ENCODE measurements at regions of chr3 and their contacts with region 1.

Region 1: DNA sequence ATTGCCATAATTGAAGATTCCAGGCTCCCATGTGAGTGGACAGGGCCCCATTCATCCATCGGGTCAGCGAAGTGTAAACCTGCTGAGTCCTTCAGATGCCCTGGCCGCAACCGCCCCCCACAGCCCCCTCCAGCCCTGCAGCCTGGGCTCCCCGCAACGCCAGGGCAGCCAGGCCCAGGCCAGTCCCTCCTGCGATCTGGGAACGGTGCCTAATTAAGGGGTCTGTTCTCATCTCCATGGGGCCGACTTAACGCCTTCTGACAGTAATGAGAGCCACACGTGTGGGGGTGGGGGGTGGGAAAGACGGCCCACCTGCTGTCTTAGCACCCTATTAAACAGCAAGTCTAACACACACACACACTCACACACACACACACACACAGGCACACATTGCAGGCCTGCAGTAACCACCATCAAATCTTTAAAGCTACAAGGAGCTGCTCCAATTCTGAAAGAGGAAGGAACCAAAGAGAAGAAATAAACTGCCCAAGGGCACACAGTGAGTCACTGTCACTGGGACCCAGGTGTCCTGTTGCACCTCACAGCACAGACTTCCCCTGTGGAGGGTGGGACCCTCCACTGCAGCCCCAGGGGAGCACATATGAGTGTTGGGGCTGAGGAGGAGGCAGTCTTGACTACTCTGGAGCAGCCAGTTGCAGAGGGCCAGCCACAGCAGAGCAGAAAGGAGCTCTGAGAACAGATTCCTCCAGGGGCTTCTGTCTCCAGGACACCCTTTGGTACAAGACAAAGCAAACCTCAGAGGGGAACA is 31.8 kb upstream of the HES1 start:
- DNase-seq: no peak
- ATAC-seq: peak; percentile 4; the same call in 2 of the 3 replicates
- H3K4me3 ChIP-seq: no peak overlapping the region
- H3K27ac ChIP-seq: no peak overlapping the region
- H3K4me1 ChIP-seq: peaks cover 43% of the 10 kb centered on the region
- H3K27me3 ChIP-seq: peaks cover 2 to 12% of the 10 kb centered on the region in 2 experiments
- CTCF ChIP-seq: no peak
- EP300 ChIP-seq: no peak
- POLR2A ChIP-seq: no peak
- RAD21 ChIP-seq: 0 out of 2 replicates have a peak, but pooled peaks have one; percentile 0

Region 2: DNA sequence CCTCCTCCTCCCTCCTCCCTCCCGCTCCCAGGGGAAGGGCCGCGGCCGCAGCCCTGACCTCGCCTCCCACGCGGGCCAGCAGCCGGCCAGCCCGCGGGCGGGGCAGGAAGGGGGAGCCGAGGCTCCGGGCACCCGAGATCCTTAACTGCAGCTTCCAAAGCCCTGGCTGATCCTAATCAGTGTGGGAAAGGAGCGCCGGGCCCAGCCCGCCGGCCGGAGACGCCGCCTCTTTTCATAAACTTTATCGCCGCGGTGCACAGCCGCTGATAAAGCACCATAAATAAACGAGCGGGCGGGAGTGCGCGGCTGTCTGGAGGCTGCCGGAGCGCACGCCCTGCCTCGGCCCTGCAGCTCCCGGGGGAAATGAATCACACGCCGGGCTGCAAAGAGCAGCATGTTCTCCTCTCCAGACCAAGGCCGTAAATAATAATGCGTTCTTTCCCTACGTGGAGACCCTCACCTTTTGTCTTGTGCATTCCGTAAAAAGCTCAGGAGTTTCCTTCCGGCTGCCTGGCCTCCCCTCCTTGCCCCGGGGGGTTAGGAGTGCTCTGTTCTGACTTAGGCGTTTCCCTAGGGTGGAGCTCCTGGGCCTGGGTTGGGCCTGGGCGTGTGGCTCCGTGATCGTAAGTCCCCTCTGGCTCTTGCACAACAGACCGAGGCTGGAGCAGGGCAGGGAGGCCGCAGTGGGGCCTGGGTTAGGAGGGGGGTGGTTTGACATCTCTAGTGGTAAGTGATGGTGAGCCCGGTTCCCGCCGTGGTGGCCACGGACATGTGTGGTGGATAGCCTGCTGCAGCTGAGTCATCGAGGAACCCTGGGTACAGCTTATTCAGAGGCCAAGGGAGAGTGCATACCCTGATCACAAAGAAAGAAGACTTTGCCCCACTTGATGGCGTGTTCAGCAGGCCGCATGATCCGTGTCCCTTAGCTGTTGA is 100.8 kb before region 1 on chr3:
- CTCF ChIA-PET with region 1: no interaction called
- POLR2A ChIA-PET with region 1: no interaction called
- RAD21 ChIA-PET with region 1: no interaction called
- SMC1A ChIA-PET with region 1: interaction called, 3 read pairs
- in situ Hi-C with region 1: no loop called
- intact Hi-C with region 1: loop called (anchors 1 kb)
- DNase-seq: peak; percentile 11
- ATAC-seq: peak; percentile 90
- H3K4me3 ChIP-seq: peak overlapping the region; percentile 71; the same call in 1 of the 2 replicates
- H3K27ac ChIP-seq: no peak overlapping the region
- H3K4me1 ChIP-seq: peaks cover 27% of the 10 kb centered on the region
- H3K27me3 ChIP-seq: no peaks in the 10 kb centered on the region; a peak in 2 of 4 replicates
- CTCF ChIP-seq: no peak
- EP300 ChIP-seq: no peak
- POLR2A ChIP-seq: no peak
- RAD21 ChIP-seq: no peak

Region 3: DNA sequence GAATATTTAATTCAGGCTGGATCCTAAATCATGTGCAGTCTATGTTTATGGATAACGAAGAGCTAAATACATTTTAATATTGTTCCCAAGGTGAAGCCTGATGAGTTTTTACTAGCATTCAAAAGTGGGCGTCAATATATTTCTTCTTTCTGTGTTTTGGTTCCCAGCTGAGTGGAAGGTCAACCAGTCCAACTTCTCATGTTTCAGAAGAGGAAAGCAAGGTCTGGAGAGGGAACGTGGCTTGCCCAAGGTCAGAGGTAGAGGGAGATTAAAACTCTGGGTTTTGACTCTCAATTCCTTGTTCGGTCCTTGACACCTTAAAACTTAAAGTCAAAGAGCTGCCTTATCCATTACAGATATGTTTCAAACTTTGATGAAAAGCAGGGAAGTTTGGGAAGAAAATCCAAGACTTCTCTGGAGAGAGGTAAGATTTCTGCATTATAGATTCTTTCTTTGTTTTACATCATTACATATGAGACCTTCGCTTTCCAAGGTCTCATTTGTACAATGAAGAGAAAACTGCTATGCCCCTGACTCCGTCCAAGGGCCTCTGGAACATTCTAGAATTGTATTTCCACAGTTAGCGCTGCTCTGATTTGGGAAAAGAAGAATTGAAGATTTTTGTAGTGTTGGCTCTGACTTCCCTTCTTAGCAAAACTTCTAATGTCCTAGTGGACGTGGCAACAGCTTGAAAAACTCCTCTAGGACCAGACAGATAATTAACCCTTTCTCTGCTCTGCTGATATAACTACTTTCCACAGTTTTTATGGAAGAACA is 25.9 kb before region 1 on chr3:
- CTCF ChIA-PET with region 1: interaction called, 3 read pairs
- POLR2A ChIA-PET with region 1: interaction called, 11 read pairs
- RAD21 ChIA-PET with region 1: no interaction called
- SMC1A ChIA-PET with region 1: no interaction called
- in situ Hi-C with region 1: no loop called
- intact Hi-C with region 1: no loop called
- DNase-seq: no peak
- ATAC-seq: no peak
- H3K4me3 ChIP-seq: no peak overlapping the region
- H3K27ac ChIP-seq: no peak overlapping the region
- H3K4me1 ChIP-seq: no peaks in the 10 kb centered on the region
- H3K27me3 ChIP-seq: peaks cover 0 to 5% of the 10 kb centered on the region in 2 experiments; a peak in 3 of 4 replicates
- CTCF ChIP-seq: no peak
- EP300 ChIP-seq: no peak
- POLR2A ChIP-seq: no peak
- RAD21 ChIP-seq: no peak

Region 4: GRCh38 chr3:194269610-194270145 is 165.5 kb after region 1 on chr3:
- CTCF ChIA-PET with region 1: no interaction called
- POLR2A ChIA-PET with region 1: no interaction called
- RAD21 ChIA-PET with region 1: no interaction called
- SMC1A ChIA-PET with region 1: no interaction called
- in situ Hi-C with region 1: no loop called
- intact Hi-C with region 1: no loop called
- DNase-seq: no peak
- ATAC-seq: no peak
- H3K4me3 ChIP-seq: no peak overlapping the region
- H3K27ac ChIP-seq: no peak overlapping the region
- H3K4me1 ChIP-seq: no peaks in the 10 kb centered on the region
- H3K27me3 ChIP-seq: peaks cover 0 to 1% of the 10 kb centered on the region in 2 experiments; a peak in 1 of 4 replicates
- CTCF ChIP-seq: no peak
- EP300 ChIP-seq: no peak
- POLR2A ChIP-seq: no peak
- RAD21 ChIP-seq: no peak

Region 5: DNA sequence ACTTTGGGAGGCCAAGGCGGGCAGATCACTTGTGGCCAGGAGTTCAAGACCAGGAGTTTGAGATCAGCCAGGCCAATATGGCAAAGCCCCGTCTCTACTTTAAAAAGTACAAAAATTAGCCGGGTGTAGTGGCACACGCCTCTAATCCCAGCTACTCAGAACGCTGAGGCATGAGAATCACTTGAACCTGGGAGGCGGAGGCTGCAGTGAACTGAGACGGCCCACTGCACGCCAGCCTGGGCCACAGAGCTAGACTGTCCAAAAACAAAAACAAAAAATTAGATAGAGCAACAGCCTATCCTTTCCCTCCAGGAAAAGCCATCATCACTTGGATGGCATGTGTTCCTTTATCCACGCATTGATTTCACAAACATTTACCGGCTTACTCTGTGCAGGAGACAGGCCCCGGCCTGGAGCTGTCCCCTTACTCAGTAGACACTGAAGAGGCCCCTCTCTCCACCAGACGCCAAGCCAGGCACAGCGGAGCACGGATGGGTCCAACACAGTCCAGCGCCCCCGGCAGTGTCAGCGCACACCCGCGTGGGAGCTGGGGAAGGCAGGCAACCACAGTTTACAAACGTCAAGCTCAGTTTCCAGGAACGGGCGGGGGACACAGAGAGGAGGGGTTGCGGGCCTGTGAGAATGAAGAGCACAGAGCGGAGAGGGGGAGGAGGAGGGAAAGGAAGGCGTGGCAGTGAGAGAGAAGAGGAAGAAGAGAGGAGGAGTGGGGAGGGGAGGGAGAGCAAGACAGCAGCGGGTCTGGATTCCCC is 291.8 kb after region 1 on chr3:
- CTCF ChIA-PET with region 1: no interaction called
- POLR2A ChIA-PET with region 1: no interaction called
- RAD21 ChIA-PET with region 1: no interaction called
- SMC1A ChIA-PET with region 1: no interaction called
- in situ Hi-C with region 1: no loop called
- intact Hi-C with region 1: no loop called
- DNase-seq: no peak
- ATAC-seq: peak; percentile 47
- H3K4me3 ChIP-seq: no peak overlapping the region
- H3K27ac ChIP-seq: no peak overlapping the region
- H3K4me1 ChIP-seq: peaks cover 7% of the 10 kb centered on the region
- H3K27me3 ChIP-seq: peaks cover 7 to 10% of the 10 kb centered on the region in 2 experiments; a peak in 3 of 4 replicates
- CTCF ChIP-seq: no peak
- EP300 ChIP-seq: no peak
- POLR2A ChIP-seq: no peak
- RAD21 ChIP-seq: no peak

Region 6: DNA sequence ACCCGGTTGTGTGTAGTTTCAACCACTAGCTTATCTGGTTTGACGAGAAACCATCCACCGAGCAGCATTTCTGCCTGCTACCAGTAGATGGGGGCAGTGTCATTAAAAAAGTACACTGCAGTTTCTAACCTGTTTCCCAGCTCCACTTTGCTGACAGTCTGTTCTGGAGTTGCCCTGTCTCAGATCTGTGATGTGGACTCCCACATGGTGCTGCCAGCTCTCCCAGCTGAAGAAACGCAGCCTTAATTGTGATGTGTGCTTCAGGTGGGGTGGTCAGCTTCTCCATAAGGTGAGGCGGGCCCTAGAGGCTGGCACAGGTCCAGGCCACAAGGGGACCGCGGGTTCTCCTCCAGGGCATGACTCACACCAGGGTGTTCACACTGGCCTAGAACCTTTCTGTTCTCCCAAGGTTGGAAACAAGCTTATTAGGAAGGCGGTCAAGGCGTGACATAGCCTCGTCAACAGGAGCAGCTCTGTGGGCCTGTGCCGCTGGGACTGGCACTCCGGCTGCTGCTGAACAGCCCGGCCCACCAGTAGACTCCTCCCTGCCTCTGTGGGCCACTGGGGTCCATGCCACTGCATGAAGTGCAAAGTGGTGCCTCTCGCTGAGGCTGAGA is 578.6 kb after region 1 on chr3:
- CTCF ChIA-PET with region 1: no interaction called
- POLR2A ChIA-PET with region 1: no interaction called
- RAD21 ChIA-PET with region 1: no interaction called
- SMC1A ChIA-PET with region 1: no interaction called
- in situ Hi-C with region 1: no loop called
- intact Hi-C with region 1: no loop called
- DNase-seq: no peak
- ATAC-seq: peak; percentile 86
- H3K4me3 ChIP-seq: no peak overlapping the region
- H3K27ac ChIP-seq: no peak overlapping the region
- H3K4me1 ChIP-seq: peaks cover 36% of the 10 kb centered on the region
- H3K27me3 ChIP-seq: peaks cover 0 to 5% of the 10 kb centered on the region in 2 experiments; a peak in 2 of 4 replicates
- CTCF ChIP-seq: peak; percentile 88 to 97 (median 94); a peak in 5 of 6 replicates
- EP300 ChIP-seq: no peak
- POLR2A ChIP-seq: no peak
- RAD21 ChIP-seq: peak; percentile 95